Panc1 (cell line): ENCODE measurements at regions of chr12 and their contacts with region 1.

Region 1: GRCh38 chr12:110698171-110698902 is 9.4 kb upstream of the HVCN1 start:
- DNase-seq: peak; percentile 69
- ATAC-seq: peak; percentile 98
- H3K4me3 ChIP-seq: peak overlapping the region in 1 of 2 experiments; percentile 33; a peak in 2 of 4 replicates
- H3K27ac ChIP-seq: no peak overlapping the region
- H3K4me1 ChIP-seq: no peaks in the 10 kb centered on the region
- H3K27me3 ChIP-seq: no peaks in the 10 kb centered on the region
- CTCF ChIP-seq: peak; percentile 87

Region 2: DNA sequence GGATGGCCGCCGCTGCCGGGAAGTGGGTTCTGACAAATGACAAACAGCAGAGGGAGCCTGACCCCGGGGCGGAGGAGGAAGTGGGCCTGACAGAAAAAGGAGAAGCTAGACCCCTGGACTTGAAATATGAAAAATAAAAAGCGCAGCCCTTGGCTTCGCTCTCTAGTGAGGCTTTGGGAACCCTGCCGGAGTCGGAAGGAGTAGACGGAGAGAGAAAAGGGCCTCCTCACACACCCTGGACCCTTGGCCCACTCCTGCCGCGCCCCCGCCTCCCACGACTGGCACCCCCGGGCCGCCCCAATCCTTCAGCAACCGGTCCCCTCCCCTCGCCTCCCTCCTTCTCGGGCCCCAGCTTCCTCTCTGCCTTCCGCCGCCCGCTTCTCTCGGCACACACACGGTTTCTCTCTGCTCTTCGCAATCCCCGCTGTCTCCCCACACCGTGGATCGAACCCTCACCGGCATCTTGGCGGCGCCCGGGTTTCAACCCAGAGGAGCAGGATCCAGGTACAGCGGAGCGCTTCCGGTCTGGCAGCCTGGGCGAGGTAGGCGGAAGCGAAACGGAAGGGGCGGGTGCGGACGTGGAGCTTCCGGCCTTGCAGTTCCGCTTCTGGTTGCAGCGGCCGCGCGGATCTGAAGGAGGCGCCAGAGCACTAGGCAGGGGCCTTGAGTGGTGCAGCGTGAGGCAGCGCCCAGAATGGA is 248.4 kb before region 1 on chr12 and contains the start of gene ARPC3:
- CTCF ChIA-PET with region 1: no interaction called
- POLR2A ChIA-PET with region 1: no interaction called
- in situ Hi-C with region 1: no loop called
- intact Hi-C with region 1: no loop called
- DNase-seq: peak; percentile 67
- ATAC-seq: peak; percentile 99
- H3K4me3 ChIP-seq: peak within 1 kb of the TSS; percentile 77 to 97
- H3K27ac ChIP-seq: peak within 1 kb of the TSS; percentile 85
- H3K4me1 ChIP-seq: peaks cover 6% of the 10 kb centered on the region; the same call in 1 of the 2 replicates
- H3K27me3 ChIP-seq: no peaks in the 10 kb centered on the region
- CTCF ChIP-seq: peak; percentile 96
- total RNA-seq, gene ARPC3: 319 TPM

Region 3: GRCh38 chr12:110590806-110591326 is 107.5 kb before region 1 on chr12:
- CTCF ChIA-PET with region 1: no interaction called
- POLR2A ChIA-PET with region 1: no interaction called
- in situ Hi-C with region 1: no loop called
- intact Hi-C with region 1: no loop called
- DNase-seq: no peak
- ATAC-seq: no peak
- H3K4me3 ChIP-seq: no peak overlapping the region
- H3K27ac ChIP-seq: no peak overlapping the region
- H3K4me1 ChIP-seq: no peaks in the 10 kb centered on the region; the same call in 1 of the 2 replicates
- H3K27me3 ChIP-seq: no peaks in the 10 kb centered on the region
- CTCF ChIP-seq: no peak

Region 4: DNA sequence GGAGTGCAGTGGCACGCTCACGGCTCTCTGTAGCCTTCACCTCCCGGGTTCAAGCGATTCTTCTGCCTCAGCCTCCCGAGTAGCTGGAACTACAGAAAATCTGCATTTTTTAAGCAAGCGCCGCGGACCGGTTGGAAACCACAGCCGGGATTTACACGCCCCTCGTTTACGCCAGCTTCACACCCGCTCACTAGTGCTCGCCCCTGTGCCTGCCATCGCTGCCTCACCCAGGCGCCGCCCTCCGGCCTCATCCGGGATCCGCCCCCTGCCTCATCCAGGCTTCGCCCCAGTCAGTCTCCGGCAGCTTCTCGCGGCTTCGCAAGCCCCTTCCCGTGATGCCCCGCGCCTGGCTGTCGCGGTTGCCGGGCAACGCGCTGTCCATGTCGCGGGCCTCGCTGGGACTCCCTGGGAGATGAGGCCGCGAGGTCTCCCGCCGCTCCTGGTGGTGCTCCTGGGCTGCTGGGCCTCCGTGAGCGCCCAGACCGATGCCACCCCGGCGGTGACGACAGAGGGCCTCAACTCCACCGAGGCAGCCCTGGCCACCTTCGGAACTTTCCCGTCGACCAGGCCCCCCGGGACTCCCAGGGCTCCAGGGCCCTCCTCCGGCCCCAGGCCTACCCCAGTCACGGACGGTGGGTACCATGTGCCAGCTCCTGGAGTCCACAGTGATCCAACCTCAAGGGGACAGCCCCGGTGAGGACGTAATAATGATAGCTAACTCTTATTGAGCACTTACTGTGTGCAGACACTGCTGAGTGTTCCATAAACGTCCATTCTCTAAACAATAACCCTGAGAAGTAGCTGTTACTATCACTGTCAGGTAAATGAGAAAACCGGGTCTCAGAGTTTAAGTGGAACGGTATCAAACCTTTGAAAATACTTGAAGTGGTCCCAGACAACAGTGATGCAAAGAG is 84.3 kb before region 1 on chr12 and contains the start of gene TCTN1:
- CTCF ChIA-PET with region 1: no interaction called
- POLR2A ChIA-PET with region 1: no interaction called
- in situ Hi-C with region 1: no loop called
- intact Hi-C with region 1: loop called (anchors 10 kb)
- DNase-seq: peak; percentile 64
- ATAC-seq: peak; percentile 100
- H3K4me3 ChIP-seq: peak within 1 kb of the TSS; percentile 66 to 81
- H3K27ac ChIP-seq: peak within 1 kb of the TSS; percentile 78
- H3K4me1 ChIP-seq: 0 out of 2 replicates have a peak, but pooled peaks cover 3% of the 10 kb centered on the region
- H3K27me3 ChIP-seq: no peaks in the 10 kb centered on the region
- CTCF ChIP-seq: no peak
- total RNA-seq, gene TCTN1: 28.5 TPM

Region 5: GRCh38 chr12:110846615-110847566 is 148.6 kb after region 1 on chr12 and contains the start of gene CCDC63:
- CTCF ChIA-PET with region 1: no interaction called
- POLR2A ChIA-PET with region 1: interaction called, 22 read pairs
- in situ Hi-C with region 1: no loop called
- intact Hi-C with region 1: no loop called
- DNase-seq: no peak
- ATAC-seq: peak; percentile 95
- H3K4me3 ChIP-seq: peak within 1 kb of the TSS; percentile 70 to 76
- H3K27ac ChIP-seq: peak within 1 kb of the TSS; percentile 67
- H3K4me1 ChIP-seq: peaks cover 5% of the 10 kb centered on the region; the same call in 1 of the 2 replicates
- H3K27me3 ChIP-seq: no peaks in the 10 kb centered on the region
- CTCF ChIP-seq: peak; percentile 88
- total RNA-seq, gene CCDC63: not detected